ENCODE measurements at regions of chr3 and their contacts with region 1.

Region 1: DNA sequence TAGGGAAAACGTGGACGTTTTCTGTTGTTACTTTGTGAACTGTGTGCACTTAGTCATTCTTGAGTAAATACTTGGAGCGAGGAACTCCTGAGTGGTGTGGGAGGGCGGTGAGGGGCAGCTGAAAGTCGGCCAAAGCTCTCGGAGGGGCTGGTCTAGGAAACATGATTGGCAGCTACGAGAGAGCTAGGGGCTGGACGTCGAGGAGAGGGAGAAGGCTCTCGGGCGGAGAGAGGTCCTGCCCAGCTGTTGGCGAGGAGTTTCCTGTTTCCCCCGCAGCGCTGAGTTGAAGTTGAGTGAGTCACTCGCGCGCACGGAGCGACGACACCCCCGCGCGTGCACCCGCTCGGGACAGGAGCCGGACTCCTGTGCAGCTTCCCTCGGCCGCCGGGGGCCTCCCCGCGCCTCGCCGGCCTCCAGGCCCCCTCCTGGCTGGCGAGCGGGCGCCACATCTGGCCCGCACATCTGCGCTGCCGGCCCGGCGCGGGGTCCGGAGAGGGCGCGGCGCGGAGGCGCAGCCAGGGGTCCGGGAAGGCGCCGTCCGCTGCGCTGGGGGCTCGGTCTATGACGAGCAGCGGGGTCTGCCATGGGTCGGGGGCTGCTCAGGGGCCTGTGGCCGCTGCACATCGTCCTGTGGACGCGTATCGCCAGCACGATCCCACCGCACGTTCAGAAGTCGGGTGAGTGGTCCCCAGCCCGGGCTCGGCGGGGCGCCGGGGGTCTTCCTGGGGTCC is at the start of gene TGFBR2:
- DNase-seq: peak; percentile 98
- ATAC-seq: peak; percentile 97
- total RNA-seq, gene TGFBR2: 186 TPM

Region 2: GRCh38 chr3:30448450-30449289 is 157.8 kb before region 1 on chr3:
- intact Hi-C with region 1: loop called (anchors 5 kb)
- DNase-seq: no peak
- ATAC-seq: no peak

Region 3: GRCh38 chr3:30681643-30682211 is 75.3 kb after region 1 on chr3:
- intact Hi-C with region 1: loop called (anchors 5 kb)
- DNase-seq: peak; percentile 80
- ATAC-seq: peak; percentile 63

Measured in Right ventricle myocardium inferior (tissue), 1 donor.